HEK293 (cell line): ENCODE measurements at regions of chr4 and their contacts with region 1.

Region 1: GRCh38 chr4:56909086-56909894 is 1.6 kb downstream of the REST start:
- H3K4me3 ChIP-seq: peak overlapping the region; percentile 72
- H3K27ac ChIP-seq: peak overlapping the region; percentile 73
- H3K4me1 ChIP-seq: no peaks in the 10 kb centered on the region
- CTCF ChIP-seq: no peak

Region 2: DNA sequence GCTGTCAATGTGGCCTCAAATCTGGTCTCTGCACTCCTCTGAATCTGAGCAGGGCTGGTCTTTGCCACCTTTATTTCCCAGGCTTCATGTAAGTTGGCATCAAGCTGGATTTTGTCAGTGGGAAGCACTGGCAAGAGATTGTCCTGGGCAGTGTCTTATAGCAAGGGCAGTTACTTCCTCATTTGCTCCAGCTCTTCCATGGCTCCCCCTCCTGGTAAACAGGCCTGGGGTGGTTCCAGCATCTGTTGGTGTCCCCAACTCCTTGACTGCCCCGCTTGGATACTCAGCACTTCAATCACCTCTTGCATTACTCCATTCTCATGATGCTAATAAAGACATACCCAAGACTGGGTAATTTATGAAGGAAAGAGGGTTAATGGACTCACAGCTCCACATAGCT is 16.6 kb before region 1 on chr4:
- CTCF ChIA-PET with region 1: no interaction called
- POLR2A ChIA-PET with region 1: interaction called, 11 read pairs
- H3K4me3 ChIP-seq: no peak overlapping the region
- H3K27ac ChIP-seq: no peak overlapping the region
- H3K4me1 ChIP-seq: no peaks in the 10 kb centered on the region
- CTCF ChIP-seq: no peak

Region 3: DNA sequence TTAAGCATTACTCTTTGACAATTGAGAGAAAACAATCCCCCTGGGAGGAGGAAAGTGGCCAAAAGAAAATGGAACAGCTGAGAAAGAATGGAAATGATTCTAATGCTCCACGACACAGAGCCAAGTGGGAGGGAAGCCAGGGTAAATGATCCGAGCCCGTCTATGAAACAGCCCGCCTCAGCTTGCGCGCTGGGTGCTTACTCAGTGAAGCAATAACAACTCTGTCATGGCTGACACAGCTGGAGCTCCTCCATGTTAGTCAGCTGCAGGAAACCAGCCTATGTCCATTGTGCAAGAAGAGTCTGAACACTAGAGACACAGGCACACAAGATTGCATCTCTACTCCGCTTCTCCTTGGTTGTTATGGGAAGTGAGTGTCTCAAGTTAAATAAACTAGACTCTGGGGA is 48.8 kb after region 1 on chr4:
- CTCF ChIA-PET with region 1: no interaction called
- POLR2A ChIA-PET with region 1: no interaction called
- H3K4me3 ChIP-seq: no peak overlapping the region
- H3K27ac ChIP-seq: no peak overlapping the region
- H3K4me1 ChIP-seq: no peaks in the 10 kb centered on the region
- CTCF ChIP-seq: no peak